ENCODE measurements at regions of chr16 and their contacts with region 1.

Region 1: GRCh38 chr16:65671-66137 is 6.7 kb downstream of the RHBDF1 start:
- DNase-seq: peak; percentile 71 to 88 (median 80)
- ATAC-seq: peak; percentile 99
- H3K4me3 ChIP-seq: no peak overlapping the region
- H3K4me3 Mint-ChIP-seq: no peak overlapping the region
- H3K27ac ChIP-seq: no peak overlapping the region
- H3K27ac Mint-ChIP-seq: no peak overlapping the region
- H3K4me1 ChIP-seq: peaks cover 6% of the 10 kb centered on the region
- H3K4me1 Mint-ChIP-seq: no peaks in the 10 kb centered on the region
- H3K27me3 ChIP-seq: peaks cover 5 to 10% of the 10 kb centered on the region in 2 experiments
- H3K27me3 Mint-ChIP-seq: peaks cover 33% of the 10 kb centered on the region
- CTCF ChIP-seq: peak; percentile 88

Region 2: DNA sequence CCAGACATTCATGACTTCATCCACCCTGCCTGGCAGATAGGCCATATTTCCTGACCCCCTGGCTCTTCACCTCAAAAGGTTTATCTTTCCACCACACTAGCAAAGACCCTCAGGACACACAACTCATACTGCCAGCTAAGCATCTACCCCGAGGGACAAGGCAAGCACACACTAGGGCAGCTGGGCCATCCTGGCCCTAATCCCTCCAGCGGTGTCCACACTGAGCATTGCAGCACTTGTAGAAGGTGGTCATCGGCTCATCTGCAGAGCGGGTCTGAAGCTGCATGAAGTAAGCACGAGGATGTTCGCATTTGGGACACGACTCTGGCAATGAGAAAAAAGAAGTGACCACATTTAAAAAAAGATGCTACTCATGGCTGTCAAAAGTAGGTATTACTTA is 18.5 kb before region 1 on chr16:
- CTCF ChIA-PET with region 1: no interaction called
- POLR2A ChIA-PET with region 1: no interaction called
- intact Hi-C with region 1: no loop called
- DNase-seq: no peak
- ATAC-seq: no peak
- H3K4me3 ChIP-seq: no peak overlapping the region
- H3K4me3 Mint-ChIP-seq: no peak overlapping the region
- H3K27ac ChIP-seq: no peak overlapping the region
- H3K27ac Mint-ChIP-seq: no peak overlapping the region
- H3K4me1 ChIP-seq: peaks cover 25% of the 10 kb centered on the region
- H3K4me1 Mint-ChIP-seq: peaks cover 25% of the 10 kb centered on the region
- H3K27me3 ChIP-seq: no peaks in the 10 kb centered on the region
- H3K27me3 Mint-ChIP-seq: no peaks in the 10 kb centered on the region
- CTCF ChIP-seq: no peak

Region 3: DNA sequence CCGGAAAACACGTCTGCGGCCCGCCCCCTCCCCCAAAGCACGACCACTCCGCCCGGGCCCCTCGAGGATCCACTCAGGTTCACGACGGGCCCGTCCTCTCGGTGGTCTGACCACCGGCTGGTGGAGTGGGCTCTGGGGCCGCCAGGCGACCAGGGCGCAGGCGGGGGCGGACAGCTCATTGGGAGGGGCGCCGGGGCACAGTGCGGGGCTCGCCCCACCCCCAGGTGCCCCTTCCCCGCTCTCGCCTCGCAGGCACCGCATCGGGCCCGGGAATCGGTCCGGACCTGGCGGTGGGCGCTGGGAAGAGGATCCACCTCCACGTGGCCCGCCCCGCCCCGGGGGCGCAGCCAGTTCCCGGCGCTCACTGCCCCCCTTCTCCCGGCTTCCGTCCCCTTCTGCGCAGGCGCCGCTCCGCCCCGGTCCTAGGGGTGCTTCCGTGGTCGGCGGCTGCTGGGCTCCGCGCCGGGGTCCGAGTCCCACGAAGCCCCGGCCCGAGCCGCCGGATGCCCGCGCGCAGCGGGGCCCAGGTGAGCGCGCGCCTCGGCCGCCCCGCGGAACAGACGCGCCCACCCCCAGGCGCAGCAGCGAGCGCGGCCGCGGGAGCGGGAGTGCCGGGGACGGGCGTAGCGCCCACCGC is 12.2 kb after region 1 on chr16 and contains the start of gene MPG:
- CTCF ChIA-PET with region 1: interaction called, 16 read pairs
- POLR2A ChIA-PET with region 1: no interaction called
- intact Hi-C with region 1: no loop called
- DNase-seq: peak; percentile 62 to 89 (median 80)
- ATAC-seq: peak; percentile 88
- H3K4me3 ChIP-seq: peak within 1 kb of the TSS; percentile 73
- H3K4me3 Mint-ChIP-seq: peak within 1 kb of the TSS; percentile 91
- H3K27ac ChIP-seq: peak within 1 kb of the TSS in 1 of 2 donors; percentile 40
- H3K27ac Mint-ChIP-seq: peak within 1 kb of the TSS; percentile 77
- H3K4me1 ChIP-seq: peaks cover 34% of the 10 kb centered on the region
- H3K4me1 Mint-ChIP-seq: peaks cover 28% of the 10 kb centered on the region
- H3K27me3 ChIP-seq: peaks cover 7 to 13% of the 10 kb centered on the region in 2 experiments
- H3K27me3 Mint-ChIP-seq: peaks cover 20% of the 10 kb centered on the region
- CTCF ChIP-seq: no peak
- total RNA-seq, gene MPG: 14.1 to 17.1 TPM

Region 4: DNA sequence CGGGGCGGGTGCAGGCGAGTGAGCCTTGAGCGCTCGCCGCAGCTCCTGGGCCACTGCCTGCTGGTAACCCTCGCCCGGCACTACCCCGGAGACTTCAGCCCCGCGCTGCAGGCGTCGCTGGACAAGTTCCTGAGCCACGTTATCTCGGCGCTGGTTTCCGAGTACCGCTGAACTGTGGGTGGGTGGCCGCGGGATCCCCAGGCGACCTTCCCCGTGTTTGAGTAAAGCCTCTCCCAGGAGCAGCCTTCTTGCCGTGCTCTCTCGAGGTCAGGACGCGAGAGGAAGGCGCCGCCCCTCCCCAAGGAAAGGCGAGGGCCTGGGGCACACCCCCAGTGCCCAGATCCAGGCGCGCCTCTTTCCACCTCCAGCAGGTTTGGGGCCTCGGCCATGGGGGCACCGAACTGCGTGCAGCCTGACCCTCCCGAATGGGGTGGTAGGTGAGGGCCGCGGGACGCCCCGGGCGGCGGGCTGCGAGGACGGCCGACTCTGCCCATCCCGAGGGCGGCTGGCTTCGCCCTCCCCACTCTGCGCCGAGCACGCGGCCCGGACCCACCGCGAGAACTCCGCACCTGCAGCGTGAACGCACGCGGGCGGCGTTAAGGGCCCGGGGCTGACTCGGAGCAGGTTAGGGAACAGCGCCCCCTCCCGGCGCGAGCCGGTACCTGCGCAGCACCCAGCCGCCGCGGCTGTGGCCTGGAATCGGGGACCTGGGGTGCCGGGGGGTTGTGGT is 115.4 kb after region 1 on chr16:
- CTCF ChIA-PET with region 1: interaction called, 16 read pairs
- POLR2A ChIA-PET with region 1: no interaction called
- intact Hi-C with region 1: loop called (anchors 1 kb)
- DNase-seq: peak; percentile 76 to 92 (median 82)
- ATAC-seq: peak; percentile 95
- H3K4me3 ChIP-seq: peak overlapping the region; percentile 46
- H3K4me3 Mint-ChIP-seq: no peak overlapping the region
- H3K27ac ChIP-seq: no peak overlapping the region
- H3K27ac Mint-ChIP-seq: no peak overlapping the region
- H3K4me1 ChIP-seq: peaks cover 25% of the 10 kb centered on the region
- H3K4me1 Mint-ChIP-seq: no peaks in the 10 kb centered on the region
- H3K27me3 ChIP-seq: peaks cover 27 to 33% of the 10 kb centered on the region in 2 experiments
- H3K27me3 Mint-ChIP-seq: peaks cover 28% of the 10 kb centered on the region
- CTCF ChIP-seq: peak; percentile 92

Region 5: GRCh38 chr16:361872-362701 is 296.4 kb after region 1 on chr16:
- CTCF ChIA-PET with region 1: interaction called, 11 read pairs
- POLR2A ChIA-PET with region 1: no interaction called
- intact Hi-C with region 1: no loop called
- DNase-seq: peak; percentile 63 to 88 (median 71)
- ATAC-seq: peak; percentile 99
- H3K4me3 ChIP-seq: no peak overlapping the region
- H3K4me3 Mint-ChIP-seq: peak overlapping the region; percentile 46
- H3K27ac ChIP-seq: no peak overlapping the region
- H3K27ac Mint-ChIP-seq: peak overlapping the region; percentile 50
- H3K4me1 ChIP-seq: peaks cover 22% of the 10 kb centered on the region
- H3K4me1 Mint-ChIP-seq: peaks cover 6% of the 10 kb centered on the region
- H3K27me3 ChIP-seq: no peaks in the 10 kb centered on the region
- H3K27me3 Mint-ChIP-seq: no peaks in the 10 kb centered on the region
- CTCF ChIP-seq: peak; percentile 72